Dendritic cell treated with granulocyte-macrophage colony-stimulating factor and Interleukin-4, amounts not matched to agents 40 ng/mL and 50 ng/mL, for 4 days (primary cell): ENCODE measurements at regions of chr13 and their contacts with region 1.

Region 1: GRCh38 chr13:75468098-75468497 is 13.9 kb downstream of the TBC1D4 start:
- H3K4me3 Mint-ChIP-seq: no peak overlapping the region
- H3K27ac Mint-ChIP-seq: no peak overlapping the region
- H3K4me1 Mint-ChIP-seq: peaks cover 7% of the 10 kb centered on the region
- H3K27me3 Mint-ChIP-seq: peaks cover 2% of the 10 kb centered on the region

Region 2: DNA sequence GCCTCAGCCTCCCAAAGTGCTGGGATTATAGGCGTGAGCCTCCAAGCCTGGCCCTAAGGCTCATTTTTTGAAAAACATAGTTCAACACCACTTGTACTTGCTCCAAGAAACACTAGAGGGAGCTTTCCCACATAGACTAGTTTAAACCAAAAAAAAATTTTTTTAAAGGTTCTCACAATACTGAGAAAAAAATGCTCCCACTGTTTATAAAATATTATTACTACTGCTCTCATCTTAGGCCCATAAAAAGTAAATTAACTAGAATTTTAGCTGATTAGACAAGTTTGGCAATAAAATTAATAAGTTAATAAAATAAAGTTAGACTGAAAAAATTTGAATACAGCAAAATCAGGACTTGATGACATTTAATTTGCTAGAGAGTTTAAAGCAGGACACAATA is 95.6 kb before region 1 on chr13:
- intact Hi-C with region 1: loop called (anchors 5 kb)
- H3K4me3 Mint-ChIP-seq: no peak overlapping the region
- H3K27ac Mint-ChIP-seq: no peak overlapping the region
- H3K4me1 Mint-ChIP-seq: no peaks in the 10 kb centered on the region
- H3K27me3 Mint-ChIP-seq: no peaks in the 10 kb centered on the region

Region 3: GRCh38 chr13:76038920-76039716 is 571.0 kb after region 1 on chr13:
- intact Hi-C with region 1: no loop called
- H3K4me3 Mint-ChIP-seq: no peak overlapping the region
- H3K27ac Mint-ChIP-seq: no peak overlapping the region
- H3K4me1 Mint-ChIP-seq: no peaks in the 10 kb centered on the region
- H3K27me3 Mint-ChIP-seq: no peaks in the 10 kb centered on the region